ENCODE measurements at regions of chr4 and their contacts with region 1.

Region 1: DNA sequence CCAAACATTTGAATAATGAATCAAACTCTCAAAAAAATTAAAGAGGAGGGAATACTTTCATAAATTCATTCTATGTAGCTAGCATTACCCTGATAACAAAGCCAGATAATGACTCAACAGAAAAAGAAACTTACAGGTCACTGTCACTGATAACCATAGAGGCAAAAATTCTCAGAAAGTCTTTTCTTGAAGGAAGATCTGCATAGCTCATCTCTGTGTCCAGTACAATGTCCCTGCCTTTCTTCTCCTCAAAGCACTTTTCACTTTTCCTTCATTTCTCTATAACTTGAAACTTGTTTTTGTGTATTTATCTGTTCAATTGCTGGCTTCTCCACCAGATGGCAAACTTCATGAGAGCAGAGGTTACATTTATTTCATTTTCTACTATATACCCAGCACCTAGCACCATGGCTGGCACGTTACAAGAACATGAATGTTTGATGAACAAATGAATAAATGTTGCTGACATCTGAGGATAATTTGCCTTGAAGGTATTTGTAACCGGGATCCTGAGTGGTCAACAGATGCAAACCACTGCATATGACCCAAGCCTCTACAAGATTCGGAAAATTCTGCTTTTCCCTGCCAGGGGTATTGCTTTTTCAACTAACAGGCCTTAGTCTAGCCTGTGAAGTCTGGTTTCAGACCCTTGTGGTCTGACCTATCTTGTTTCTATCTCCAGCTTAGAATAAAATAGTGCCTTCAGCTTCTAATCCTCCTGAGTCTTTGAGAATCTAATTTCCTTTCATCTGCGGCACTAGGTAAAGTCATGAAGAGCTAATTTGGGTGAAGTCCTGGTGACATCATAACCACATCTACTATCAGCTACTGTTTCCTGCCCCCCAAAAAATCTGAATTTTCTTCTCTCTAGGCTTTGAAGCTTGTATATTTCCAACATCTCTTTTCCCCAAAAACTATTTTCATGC is 52.5 kb upstream of the ANTXR2 start:
- DNase-seq: peak; percentile 39
- H3K4me3 Mint-ChIP-seq: no peak overlapping the region
- H3K27ac Mint-ChIP-seq: peak overlapping the region; percentile 17
- H3K4me1 Mint-ChIP-seq: peaks cover 49% of the 10 kb centered on the region
- H3K27me3 Mint-ChIP-seq: no peaks in the 10 kb centered on the region

Region 2: GRCh38 chr4:78656968-78657445 is 1468.5 kb before region 1 on chr4:
- CTCF ChIA-PET with region 1: no interaction called
- intact Hi-C with region 1: loop called (anchors 5 kb)
- DNase-seq: peak; percentile 45
- H3K4me3 Mint-ChIP-seq: peak overlapping the region; percentile 32
- H3K27ac Mint-ChIP-seq: peak overlapping the region; percentile 84
- H3K4me1 Mint-ChIP-seq: peaks cover 45% of the 10 kb centered on the region
- H3K27me3 Mint-ChIP-seq: no peaks in the 10 kb centered on the region

Region 3: DNA sequence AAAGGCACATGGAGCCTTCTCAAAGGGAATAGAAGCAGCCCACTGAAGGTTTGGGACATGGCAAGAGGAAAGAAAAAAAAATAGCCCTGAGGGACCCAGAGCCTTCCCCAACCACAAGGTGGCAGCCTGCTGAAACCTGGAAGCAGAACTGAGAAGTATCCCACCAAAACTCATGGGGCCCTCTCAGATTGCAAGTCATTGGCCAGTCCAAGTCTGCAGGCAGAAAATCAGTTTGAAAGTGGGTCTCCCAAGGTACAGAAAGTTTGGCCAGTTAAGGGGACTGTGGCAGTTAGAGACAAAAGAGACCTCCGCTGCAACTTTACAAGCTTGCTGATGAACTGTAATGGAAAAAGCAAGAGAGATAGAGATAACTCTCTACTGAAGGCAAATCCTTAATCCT is 208.3 kb before region 1 on chr4:
- CTCF ChIA-PET with region 1: no interaction called
- intact Hi-C with region 1: loop called (anchors 5 kb)
- DNase-seq: peak; percentile 67
- H3K4me3 Mint-ChIP-seq: no peak overlapping the region
- H3K27ac Mint-ChIP-seq: no peak overlapping the region
- H3K4me1 Mint-ChIP-seq: peaks cover 2% of the 10 kb centered on the region
- H3K27me3 Mint-ChIP-seq: no peaks in the 10 kb centered on the region

Region 4: DNA sequence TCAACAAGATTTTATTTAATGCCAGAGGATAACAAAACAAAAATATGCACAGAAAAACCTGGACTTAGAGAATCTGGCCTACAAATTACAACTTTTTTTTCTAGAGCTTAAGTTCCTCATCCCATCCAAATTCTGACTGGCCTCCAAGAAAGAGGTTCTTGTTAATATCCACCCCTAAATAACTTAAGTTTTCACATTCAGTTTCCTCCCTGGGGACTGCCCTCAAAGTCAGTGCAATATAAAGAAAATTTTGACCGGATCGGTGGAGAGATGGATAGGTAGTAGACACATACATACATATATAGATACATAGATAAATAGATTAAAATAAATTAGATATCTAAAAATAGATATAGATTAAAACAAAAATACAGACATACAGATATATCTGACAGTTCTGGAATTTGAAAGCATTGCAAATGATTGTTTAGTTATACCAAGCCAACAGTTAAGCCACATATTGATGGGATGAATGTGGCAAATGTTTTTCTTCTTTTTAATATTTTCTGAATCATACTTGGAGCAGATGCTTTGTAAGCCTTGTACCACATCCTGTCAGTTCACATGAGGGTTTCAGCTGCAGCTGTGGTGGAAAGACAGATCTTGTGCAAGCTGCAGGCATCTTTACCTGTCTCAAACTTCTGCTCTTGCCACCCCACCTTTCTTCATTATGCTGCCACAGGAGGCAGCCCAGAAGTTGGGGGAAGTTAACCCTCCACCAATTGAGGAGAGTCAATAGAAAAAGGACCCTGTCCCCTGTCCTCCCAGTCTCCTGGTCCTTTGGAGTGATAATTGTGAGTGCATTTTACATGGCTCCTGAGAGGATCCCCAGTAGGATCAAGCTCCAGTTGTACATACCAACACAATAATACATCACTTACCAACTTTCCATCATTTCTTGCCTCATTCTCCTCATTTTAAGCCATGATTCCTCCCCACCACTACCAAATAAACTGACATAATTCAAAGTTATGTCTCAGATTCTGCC is 13.3 kb after region 1 on chr4:
- CTCF ChIA-PET with region 1: interaction called, 17 read pairs
- intact Hi-C with region 1: loop called (anchors 1 kb)
- DNase-seq: peak; percentile 82
- H3K4me3 Mint-ChIP-seq: no peak overlapping the region
- H3K27ac Mint-ChIP-seq: no peak overlapping the region
- H3K4me1 Mint-ChIP-seq: peaks cover 57% of the 10 kb centered on the region
- H3K27me3 Mint-ChIP-seq: no peaks in the 10 kb centered on the region

Region 5: GRCh38 chr4:80184053-80184790 is 58.7 kb after region 1 on chr4:
- CTCF ChIA-PET with region 1: interaction called, 79 read pairs
- intact Hi-C with region 1: loop called (anchors 1 kb)
- DNase-seq: peak; percentile 90
- H3K4me3 Mint-ChIP-seq: peak overlapping the region; percentile 97
- H3K27ac Mint-ChIP-seq: peak overlapping the region; percentile 70
- H3K4me1 Mint-ChIP-seq: peaks cover 46% of the 10 kb centered on the region
- H3K27me3 Mint-ChIP-seq: peaks cover 11% of the 10 kb centered on the region

Region 6: GRCh38 chr4:81164126-81164525 is 1038.6 kb after region 1 on chr4:
- CTCF ChIA-PET with region 1: no interaction called
- intact Hi-C with region 1: no loop called
- DNase-seq: no peak
- H3K4me3 Mint-ChIP-seq: no peak overlapping the region
- H3K27ac Mint-ChIP-seq: no peak overlapping the region
- H3K4me1 Mint-ChIP-seq: no peaks in the 10 kb centered on the region
- H3K27me3 Mint-ChIP-seq: peaks cover 8% of the 10 kb centered on the region

Region 7: GRCh38 chr4:81648576-81649275 is 1523.2 kb after region 1 on chr4:
- CTCF ChIA-PET with region 1: no interaction called
- intact Hi-C with region 1: loop called (anchors 5 kb)
- DNase-seq: peak; percentile 60
- H3K4me3 Mint-ChIP-seq: no peak overlapping the region
- H3K27ac Mint-ChIP-seq: no peak overlapping the region
- H3K4me1 Mint-ChIP-seq: peaks cover 57% of the 10 kb centered on the region
- H3K27me3 Mint-ChIP-seq: no peaks in the 10 kb centered on the region

Measured in activated naive CD4-positive, alpha-beta T cell treated with anti-CD3 and anti-CD28 coated beads for 36 hours (primary cell).